ENCODE measurements at regions of chr14 and their contacts with region 1.

Region 1: DNA sequence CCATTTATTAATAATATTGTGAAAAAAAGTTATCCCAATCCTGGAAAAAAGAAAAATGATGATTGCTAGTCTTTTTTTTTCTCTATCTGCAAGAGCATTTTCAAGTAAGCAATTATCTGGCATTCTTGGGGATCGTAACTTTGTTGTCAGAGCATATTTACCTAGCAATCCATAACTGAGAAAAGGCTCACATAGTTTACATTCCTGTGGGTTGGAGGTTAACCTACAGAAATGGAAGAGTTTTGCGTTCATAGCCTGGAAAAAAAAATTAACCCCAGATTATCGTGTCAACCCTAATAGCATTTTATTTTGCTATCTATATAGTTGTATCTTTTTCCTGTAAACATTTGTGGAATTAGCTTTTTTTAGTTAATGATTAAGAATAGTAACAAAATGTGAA is 292.3 kb downstream of the DAD1 start:
- DNase-seq: peak; percentile 89
- ATAC-seq: peak; percentile 87
- H3K4me3 ChIP-seq: peak overlapping the region; percentile 43; the same call in 1 of the 2 replicates
- H3K27ac ChIP-seq: peak overlapping the region; percentile 23
- H3K4me1 ChIP-seq: peaks cover 47% of the 10 kb centered on the region
- H3K27me3 ChIP-seq: no peaks in the 10 kb centered on the region
- CTCF ChIP-seq: no peak

Region 2: GRCh38 chr14:22243971-22244581 is 52.6 kb before region 1 on chr14:
- CTCF ChIA-PET with region 1: no interaction called
- POLR2A ChIA-PET with region 1: no interaction called
- intact Hi-C with region 1: loop called (anchors 2 kb)
- DNase-seq: no peak
- ATAC-seq: no peak
- H3K4me3 ChIP-seq: no peak overlapping the region
- H3K27ac ChIP-seq: no peak overlapping the region
- H3K4me1 ChIP-seq: peaks cover 6% of the 10 kb centered on the region; the same call in 1 of the 2 replicates
- H3K27me3 ChIP-seq: no peaks in the 10 kb centered on the region
- CTCF ChIP-seq: no peak

Region 3: DNA sequence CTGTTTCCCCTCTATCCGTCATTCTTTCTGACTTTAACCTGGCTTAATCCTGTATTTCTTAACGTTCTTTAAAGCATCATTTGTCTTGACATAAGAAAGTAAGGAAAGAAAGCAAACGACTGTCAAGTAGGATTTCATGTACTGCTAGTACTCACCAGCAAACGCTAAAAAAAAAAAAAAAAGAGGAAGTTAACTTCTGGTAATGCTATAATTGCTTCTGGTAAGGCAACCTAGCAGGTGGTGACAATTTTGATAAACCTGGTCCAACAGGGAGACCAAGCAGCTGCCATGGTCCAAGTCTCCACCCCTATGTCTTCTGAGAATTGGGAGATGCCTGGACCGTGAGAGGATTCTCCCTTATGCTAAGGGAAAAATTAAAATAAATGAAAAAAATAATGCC is 14.3 kb before region 1 on chr14:
- CTCF ChIA-PET with region 1: no interaction called
- POLR2A ChIA-PET with region 1: no interaction called
- intact Hi-C with region 1: loop called (anchors 1 kb)
- DNase-seq: no peak
- ATAC-seq: no peak
- H3K4me3 ChIP-seq: no peak overlapping the region
- H3K27ac ChIP-seq: no peak overlapping the region
- H3K4me1 ChIP-seq: peaks cover 13% of the 10 kb centered on the region
- H3K27me3 ChIP-seq: no peaks in the 10 kb centered on the region
- CTCF ChIP-seq: no peak

Region 4: GRCh38 chr14:22400655-22401259 is 104.0 kb after region 1 on chr14:
- CTCF ChIA-PET with region 1: no interaction called
- POLR2A ChIA-PET with region 1: no interaction called
- intact Hi-C with region 1: no loop called
- DNase-seq: no peak
- ATAC-seq: no peak
- H3K4me3 ChIP-seq: no peak overlapping the region
- H3K27ac ChIP-seq: no peak overlapping the region
- H3K4me1 ChIP-seq: peaks cover 6% of the 10 kb centered on the region; the same call in 1 of the 2 replicates
- H3K27me3 ChIP-seq: no peaks in the 10 kb centered on the region
- CTCF ChIP-seq: no peak

Measured in PC-3 (cell line).